ENCODE measurements at regions of chr5 and their contacts with region 1.

Region 1: DNA sequence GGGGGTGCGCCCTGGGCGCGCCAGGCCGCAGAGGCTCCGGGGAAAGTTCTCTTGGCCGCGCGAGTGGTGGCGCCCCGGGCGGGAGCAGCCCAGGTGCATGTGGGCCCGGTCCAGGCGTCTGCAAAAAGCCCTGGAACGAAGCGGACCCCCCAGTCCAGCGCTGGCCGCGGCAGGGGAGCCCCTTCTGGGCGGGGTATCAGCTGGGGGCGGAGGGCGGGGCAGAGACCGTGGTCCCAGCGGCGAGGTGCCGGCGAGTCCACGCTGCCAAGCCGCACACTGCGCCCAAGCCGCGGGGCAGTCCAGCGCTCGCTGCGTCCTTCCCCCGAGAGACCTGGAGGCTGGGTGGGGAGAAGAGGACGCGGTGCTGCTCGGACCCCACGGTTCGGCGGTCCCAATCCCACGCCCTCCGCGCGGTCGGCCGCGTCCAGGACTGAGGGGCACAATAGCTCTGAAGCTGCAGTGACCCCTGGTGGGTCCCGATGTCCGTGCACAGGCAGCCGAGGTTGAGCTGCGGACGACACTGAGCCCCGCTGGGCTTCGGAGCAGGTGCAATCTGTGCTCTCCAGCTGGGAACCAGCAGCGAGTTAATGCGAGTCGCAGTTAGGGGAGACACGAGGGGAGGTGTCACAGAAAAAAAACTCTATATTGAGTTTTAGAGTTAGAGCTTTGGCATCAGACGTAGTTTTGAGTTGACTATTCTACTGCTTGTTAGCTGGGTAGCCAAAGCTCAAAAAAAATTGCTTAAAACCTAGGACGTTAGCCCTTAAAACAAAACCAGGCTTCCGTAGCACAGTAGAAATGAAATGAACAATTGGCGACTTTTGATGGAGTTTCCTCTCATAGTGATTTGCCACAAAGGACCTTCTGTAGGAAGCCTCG is 1.1 kb upstream of the EPB41L4A start:
- DNase-seq: peak; percentile 88
- H3K4me3 ChIP-seq: peak overlapping the region; percentile 57 to 90 (median 70)
- H3K27ac ChIP-seq: peak overlapping the region; percentile 70 to 81 (median 72)
- H3K4me1 ChIP-seq: peaks cover 0 to 10% (median 4%) of the 10 kb centered on the region in 4 donors
- H3K27me3 ChIP-seq: peaks cover 0 to 4% (median 0%) of the 10 kb centered on the region in 3 donors
- CTCF ChIP-seq: peak; percentile 58 to 80 (median 68)
- EP300 ChIP-seq: no peak
- POLR2A ChIP-seq: no peak

Region 2: DNA sequence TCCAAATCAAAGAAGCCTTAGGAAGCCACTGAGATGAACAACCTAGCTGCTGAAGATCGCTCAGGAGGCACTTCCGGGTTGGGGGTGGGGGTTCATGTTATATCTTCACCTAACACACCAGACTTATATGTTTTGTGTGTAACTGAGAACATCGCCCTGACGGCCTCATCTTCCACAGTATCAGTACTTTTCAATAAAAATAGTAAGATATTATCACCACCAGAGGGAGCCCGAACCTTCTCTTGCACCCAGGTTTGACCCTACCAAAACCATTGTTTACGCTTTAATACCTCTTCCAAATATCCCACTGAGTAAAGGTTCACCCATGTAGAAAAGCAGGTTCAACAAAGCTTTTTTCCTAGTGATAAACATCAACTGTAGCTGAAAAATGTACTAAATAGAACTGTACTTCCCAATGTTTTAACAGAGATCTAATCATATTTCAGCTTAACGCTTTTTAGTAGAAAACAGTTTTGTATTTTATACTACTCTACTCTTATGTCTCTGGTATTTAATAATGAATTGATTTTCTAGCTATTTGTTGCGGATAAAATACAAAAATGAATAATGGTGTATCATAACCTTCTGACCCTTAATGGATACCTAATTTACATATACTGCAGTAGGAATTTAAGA is 245.1 kb before region 1 on chr5:
- intact Hi-C with region 1: loop called (anchors 1 kb)
- DNase-seq: no peak
- H3K4me3 ChIP-seq: no peak overlapping the region
- H3K27ac ChIP-seq: no peak overlapping the region
- H3K4me1 ChIP-seq: peaks cover 0 to 4% (median 0%) of the 10 kb centered on the region in 4 donors
- H3K27me3 ChIP-seq: no peaks in the 10 kb centered on the region
- CTCF ChIP-seq: peak; percentile 15 to 51 (median 44)
- EP300 ChIP-seq: no peak
- POLR2A ChIP-seq: no peak

Region 3: GRCh38 chr5:112210430-112211005 is 209.7 kb before region 1 on chr5:
- intact Hi-C with region 1: loop called (anchors 2 kb)
- DNase-seq: no peak
- H3K4me3 ChIP-seq: no peak overlapping the region
- H3K27ac ChIP-seq: no peak overlapping the region
- H3K4me1 ChIP-seq: no peaks in the 10 kb centered on the region
- H3K27me3 ChIP-seq: no peaks in the 10 kb centered on the region
- CTCF ChIP-seq: peak in 3 of 4 experiments; percentile 36 to 48 (median 42)
- EP300 ChIP-seq: no peak
- POLR2A ChIP-seq: no peak

Measured in sigmoid colon (tissue), 7 donors.